Calu3 (cell line): ENCODE measurements at regions of chr16 and their contacts with region 1.

Region 1: GRCh38 chr16:73172241-73172972 is 124.5 kb upstream of the ZFHX3 start:
- DNase-seq: peak; percentile 46
- H3K4me3 Mint-ChIP-seq: no peak overlapping the region
- H3K27ac Mint-ChIP-seq: no peak overlapping the region
- H3K4me1 Mint-ChIP-seq: peaks cover 24% of the 10 kb centered on the region
- H3K27me3 Mint-ChIP-seq: peaks cover 60% of the 10 kb centered on the region
- CTCF ChIP-seq: peak; percentile 32

Region 2: GRCh38 chr16:73082608-73083007 is 89.8 kb before region 1 on chr16:
- CTCF ChIA-PET with region 1: interaction called, 11 read pairs
- intact Hi-C with region 1: no loop called
- DNase-seq: no peak
- H3K4me3 Mint-ChIP-seq: no peak overlapping the region
- H3K27ac Mint-ChIP-seq: no peak overlapping the region
- H3K4me1 Mint-ChIP-seq: no peaks in the 10 kb centered on the region
- H3K27me3 Mint-ChIP-seq: peaks cover 42% of the 10 kb centered on the region
- CTCF ChIP-seq: no peak

Region 3: DNA sequence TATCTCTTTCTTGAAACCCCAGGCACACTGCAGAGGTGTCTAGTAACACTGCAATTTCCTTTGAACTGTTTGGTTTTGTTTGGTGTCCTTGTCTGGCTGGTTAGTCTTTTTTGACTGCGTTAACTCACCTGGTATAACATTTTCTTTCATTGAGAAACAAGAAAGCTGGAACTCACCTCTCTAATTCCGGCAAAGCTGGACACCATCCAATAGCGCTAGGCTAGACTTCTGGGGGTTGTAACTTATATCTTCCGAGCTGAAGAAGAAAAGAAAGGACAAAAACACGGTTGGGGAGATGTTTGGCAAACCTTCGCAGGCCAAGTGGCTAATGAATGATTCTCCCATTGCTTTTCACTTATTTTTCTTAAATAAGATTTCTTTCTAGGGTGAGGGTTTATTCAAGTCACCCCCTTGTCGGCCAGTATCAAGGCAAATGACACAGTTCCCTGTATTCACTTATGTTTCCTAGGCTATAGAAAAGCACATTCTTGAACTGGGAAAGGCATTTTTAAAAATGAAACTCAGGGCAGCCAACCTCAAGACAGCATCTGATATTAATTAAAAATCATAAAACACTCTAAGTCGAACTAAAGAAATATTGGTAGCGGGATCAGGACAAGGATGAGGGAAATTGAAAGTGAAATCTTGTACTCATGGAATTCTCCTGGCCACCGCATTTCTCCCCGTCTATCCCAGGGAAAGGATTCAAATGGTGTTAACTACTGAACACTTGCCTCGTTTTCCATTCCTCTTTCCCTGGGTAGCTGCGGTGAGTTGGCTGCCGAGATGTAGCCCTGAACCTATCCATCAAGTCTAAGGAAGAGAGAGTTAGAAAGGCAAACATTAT is 28.6 kb before region 1 on chr16:
- CTCF ChIA-PET with region 1: no interaction called
- intact Hi-C with region 1: loop called (anchors 2 kb)
- DNase-seq: no peak
- H3K4me3 Mint-ChIP-seq: peak overlapping the region; percentile 32
- H3K27ac Mint-ChIP-seq: no peak overlapping the region
- H3K4me1 Mint-ChIP-seq: peaks cover 10% of the 10 kb centered on the region
- H3K27me3 Mint-ChIP-seq: peaks cover 68% of the 10 kb centered on the region
- CTCF ChIP-seq: no peak